ENCODE measurements at regions of chr12 and their contacts with region 1.

Region 1: DNA sequence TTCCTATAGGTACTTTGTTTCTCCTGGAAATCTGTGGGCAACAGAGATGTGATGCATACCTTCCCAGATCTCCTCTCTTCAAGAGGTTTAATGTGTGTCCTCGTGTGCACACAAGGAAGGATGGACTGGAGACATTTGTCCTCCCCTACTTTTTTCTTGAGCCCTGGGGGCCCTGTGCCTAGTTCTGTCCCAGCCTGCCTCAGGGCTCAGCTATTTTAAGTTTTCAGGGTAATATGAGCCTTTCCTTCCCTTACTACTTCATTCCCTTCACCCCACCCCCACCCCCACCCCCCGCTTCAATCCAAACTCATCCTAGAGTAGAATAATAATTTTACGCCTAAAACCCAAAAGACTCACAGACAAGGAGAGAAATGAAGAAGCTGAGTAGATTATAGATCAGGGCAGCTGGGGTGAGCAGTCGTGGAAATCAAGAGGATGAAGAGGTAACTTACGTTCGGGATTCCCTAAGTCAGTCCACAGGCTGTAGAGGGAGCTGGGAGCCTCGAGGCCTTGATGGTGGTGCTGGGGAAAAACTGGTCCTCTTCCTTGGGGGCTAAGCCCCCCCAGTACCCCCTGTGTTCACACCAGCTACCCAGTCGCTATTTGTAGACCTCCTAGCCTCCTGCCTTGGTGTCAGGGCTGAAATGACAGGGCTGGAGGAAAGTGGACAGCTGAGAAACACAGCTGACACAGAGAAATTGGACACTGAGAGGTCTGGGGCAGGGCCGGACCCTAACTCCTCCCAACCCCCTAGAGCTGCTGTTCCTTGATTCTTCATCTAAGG is at the start of gene STAC3:
- DNase-seq: no peak
- ATAC-seq: no peak
- H3K4me3 ChIP-seq: no peak within 1 kb of the TSS
- H3K27ac ChIP-seq: no peak within 1 kb of the TSS
- H3K4me1 ChIP-seq: no peaks in the 10 kb centered on the region
- H3K27me3 ChIP-seq: no peaks in the 10 kb centered on the region
- CTCF ChIP-seq: no peak
- total RNA-seq, gene STAC3: 0.87 TPM

Region 2: GRCh38 chr12:57372233-57372632 is 121.5 kb after region 1 on chr12:
- CTCF ChIA-PET with region 1: no interaction called
- POLR2A ChIA-PET with region 1: no interaction called
- in situ Hi-C with region 1: no loop called
- intact Hi-C with region 1: no loop called
- DNase-seq: no peak
- ATAC-seq: no peak
- H3K4me3 ChIP-seq: no peak overlapping the region
- H3K27ac ChIP-seq: no peak overlapping the region
- H3K4me1 ChIP-seq: no peaks in the 10 kb centered on the region
- H3K27me3 ChIP-seq: no peaks in the 10 kb centered on the region
- CTCF ChIP-seq: no peak

Region 3: DNA sequence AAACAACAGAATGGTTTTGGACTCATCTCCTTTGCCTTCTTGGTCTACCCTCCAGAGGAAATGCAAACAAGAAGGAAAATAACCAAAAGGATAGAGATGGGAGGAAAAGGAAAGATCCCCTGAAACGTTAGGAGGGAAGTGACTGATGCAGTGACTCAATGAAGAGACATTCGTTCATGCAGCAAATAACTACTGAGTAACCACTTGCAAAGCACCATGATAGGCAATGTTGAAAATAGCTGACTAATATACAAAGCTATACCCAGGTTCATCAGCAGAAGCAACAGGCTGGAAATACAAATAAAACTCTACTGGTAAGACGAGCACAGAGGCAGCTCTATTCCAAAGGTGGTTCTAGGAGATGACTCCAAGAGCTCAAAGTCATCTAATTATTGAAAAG is 138.3 kb after region 1 on chr12:
- CTCF ChIA-PET with region 1: interaction called, 11 read pairs
- POLR2A ChIA-PET with region 1: no interaction called
- in situ Hi-C with region 1: no loop called
- intact Hi-C with region 1: no loop called
- DNase-seq: peak; percentile 79
- ATAC-seq: peak; percentile 91
- H3K4me3 ChIP-seq: no peak overlapping the region
- H3K27ac ChIP-seq: peak overlapping the region; percentile 55
- H3K4me1 ChIP-seq: peaks cover 13% of the 10 kb centered on the region; the same call in 1 of the 2 replicates
- H3K27me3 ChIP-seq: no peaks in the 10 kb centered on the region
- CTCF ChIP-seq: no peak